Activated CD4-positive, alpha-beta T cell treated with anti-CD3 and anti-CD28 coated beads, Interleukin-2, amount 10 ng/mL, durations not matched to agents 24 days and 14 days (primary cell): ENCODE measurements at regions of chr11 and their contacts with region 1.

Region 1: DNA sequence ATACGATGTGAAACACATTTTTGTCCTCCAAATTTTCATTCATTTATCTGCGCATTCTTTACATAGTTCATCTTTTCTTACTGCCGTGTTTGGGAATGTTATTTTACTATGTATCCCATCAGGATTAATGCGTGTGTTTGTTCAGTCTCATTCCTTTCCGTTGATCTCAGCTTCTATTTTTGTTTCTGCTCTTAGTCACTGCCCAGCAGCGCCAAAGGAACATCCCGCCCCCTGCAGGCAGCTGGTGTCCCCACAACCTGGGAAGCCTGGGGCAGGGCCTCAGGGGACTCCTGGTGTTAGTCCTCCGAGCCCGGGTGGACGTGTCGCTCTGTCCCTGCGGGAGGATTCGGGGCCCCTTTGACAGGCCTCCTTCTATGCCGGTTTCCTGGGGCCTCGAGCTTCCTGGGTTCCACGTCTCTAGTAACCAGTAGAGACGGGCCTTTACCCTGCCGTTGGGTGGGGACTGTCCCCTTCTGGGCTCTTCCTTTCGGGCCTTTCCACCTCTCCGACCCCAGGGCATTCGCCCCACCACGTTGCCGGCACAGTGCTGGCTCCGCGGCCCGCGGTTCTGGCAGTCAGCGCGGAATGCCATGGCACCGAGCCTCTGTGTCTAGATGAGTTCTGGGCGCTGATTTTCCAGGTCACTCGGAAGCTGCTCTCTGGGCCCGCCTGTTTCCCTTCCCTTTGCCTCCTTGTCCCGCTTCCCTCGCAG is 39.8 kb downstream of the WEE1 start:
- DNase-seq: peak; percentile 96
- H3K4me3 Mint-ChIP-seq: peak overlapping the region; percentile 90
- H3K27ac Mint-ChIP-seq: peak overlapping the region; percentile 98
- H3K4me1 Mint-ChIP-seq: peaks cover 35% of the 10 kb centered on the region
- H3K27me3 Mint-ChIP-seq: no peaks in the 10 kb centered on the region

Region 2: DNA sequence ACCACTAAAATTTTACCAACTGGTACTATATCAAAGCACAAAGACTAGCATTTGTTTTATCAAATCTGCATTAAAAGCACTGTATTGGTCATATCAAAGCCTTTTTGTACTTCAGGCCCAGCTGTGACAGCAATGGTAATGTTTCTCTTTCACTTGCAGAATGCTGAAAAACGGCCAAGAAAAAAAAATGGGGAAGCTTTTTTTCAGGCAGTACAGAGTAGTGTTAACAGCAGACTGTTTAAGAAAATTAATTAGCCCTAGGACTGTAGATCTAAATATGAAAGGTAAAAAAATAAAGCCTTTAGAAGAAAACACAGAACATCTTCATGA is 381.5 kb before region 1 on chr11:
- intact Hi-C with region 1: no loop called
- DNase-seq: peak; percentile 76
- H3K4me3 Mint-ChIP-seq: peak overlapping the region; percentile 67
- H3K27ac Mint-ChIP-seq: peak overlapping the region; percentile 16
- H3K4me1 Mint-ChIP-seq: peaks cover 36% of the 10 kb centered on the region
- H3K27me3 Mint-ChIP-seq: no peaks in the 10 kb centered on the region

Region 3: DNA sequence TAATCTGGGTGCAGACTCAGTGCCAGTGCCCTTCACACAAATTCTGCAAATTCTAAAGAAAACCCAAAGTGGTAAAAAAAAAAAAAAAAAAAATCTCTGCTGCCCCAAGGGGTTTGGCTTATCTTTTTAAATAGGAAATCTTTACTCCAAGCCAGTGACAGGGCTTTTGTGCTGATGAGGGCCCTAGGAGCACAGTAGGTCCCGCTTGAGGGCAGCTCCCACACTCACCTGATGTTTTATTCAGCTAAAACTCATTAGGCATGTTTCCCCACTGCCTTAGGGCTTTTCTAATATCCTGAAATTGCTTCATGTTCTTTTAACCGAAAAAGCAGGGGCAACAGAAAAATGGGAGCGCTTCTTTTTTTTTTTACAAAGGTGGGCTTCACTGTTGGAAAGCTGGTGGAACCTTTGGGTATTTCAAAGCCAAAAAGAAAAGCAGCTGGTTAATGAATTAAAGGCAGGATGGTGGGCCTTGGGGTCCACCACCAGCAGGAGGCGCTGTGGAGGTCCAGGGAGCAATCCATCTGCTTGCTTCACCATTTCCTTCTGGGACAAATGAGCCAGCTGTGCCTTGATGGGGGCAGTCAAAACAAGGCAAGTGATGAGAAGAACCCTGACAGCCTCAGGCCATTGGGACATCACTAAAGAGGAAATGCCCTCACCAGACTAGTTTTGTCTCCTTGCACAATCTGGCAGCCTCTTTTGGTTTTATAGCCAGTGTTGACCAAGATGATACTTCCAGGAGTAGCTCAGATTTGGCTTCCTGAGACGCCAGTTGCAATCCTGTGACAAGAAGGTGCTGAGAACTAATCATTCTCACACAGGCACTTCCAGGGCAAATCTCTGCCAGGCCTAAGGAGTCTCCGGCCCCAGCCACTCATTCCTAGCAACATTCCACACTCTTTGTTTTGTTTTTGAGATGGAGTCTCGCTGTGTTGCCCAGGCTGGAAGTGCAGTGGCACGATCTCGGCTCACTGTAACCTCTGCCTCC is 78.2 kb before region 1 on chr11:
- intact Hi-C with region 1: loop called (anchors 1 kb)
- DNase-seq: peak; percentile 93
- H3K4me3 Mint-ChIP-seq: no peak overlapping the region
- H3K27ac Mint-ChIP-seq: no peak overlapping the region
- H3K4me1 Mint-ChIP-seq: no peaks in the 10 kb centered on the region
- H3K27me3 Mint-ChIP-seq: no peaks in the 10 kb centered on the region

Region 4: DNA sequence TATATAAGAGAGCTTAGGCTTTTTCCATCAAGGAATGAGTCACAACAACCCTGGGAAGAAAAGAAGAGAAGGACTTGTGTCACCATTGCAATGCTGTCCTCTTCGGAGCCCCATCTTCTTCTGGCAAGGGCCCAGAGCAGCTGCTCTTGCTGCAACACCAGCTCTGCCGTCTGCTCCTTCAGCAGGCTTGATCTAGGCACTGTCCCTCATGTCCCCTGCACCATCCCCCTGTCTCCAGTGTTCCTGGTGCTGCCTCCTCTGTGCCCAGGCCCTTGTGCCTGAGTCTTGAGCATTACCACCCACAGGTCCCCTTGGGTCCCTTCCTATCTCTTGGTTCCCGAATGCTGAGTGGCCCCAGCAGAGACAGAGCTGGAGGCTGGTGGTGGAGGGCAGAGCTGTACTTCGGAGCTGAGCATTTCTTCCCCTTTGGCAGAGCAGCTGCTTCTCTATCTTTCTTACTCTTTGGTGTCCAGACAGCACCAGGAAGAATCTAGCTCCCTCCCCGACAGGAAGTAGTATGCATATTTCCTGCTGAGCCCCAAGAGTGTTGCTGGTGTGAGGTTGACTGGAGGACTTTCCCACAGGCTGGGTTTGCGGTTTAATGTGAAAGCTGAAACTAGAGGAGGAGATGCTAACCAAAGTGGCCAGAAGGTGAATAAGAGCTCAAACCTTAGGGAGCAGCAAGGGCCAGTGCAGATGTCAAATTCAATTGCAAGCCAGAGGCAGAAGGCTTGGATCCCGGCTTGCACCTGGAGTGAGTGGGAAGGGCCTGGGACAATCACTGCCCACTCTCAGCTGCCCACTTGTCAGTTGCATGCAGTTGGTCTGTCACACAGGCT is 12.0 kb before region 1 on chr11:
- intact Hi-C with region 1: loop called (anchors 1 kb)
- DNase-seq: peak; percentile 92
- H3K4me3 Mint-ChIP-seq: peak overlapping the region; percentile 83
- H3K27ac Mint-ChIP-seq: peak overlapping the region; percentile 88
- H3K4me1 Mint-ChIP-seq: peaks cover 30% of the 10 kb centered on the region
- H3K27me3 Mint-ChIP-seq: peaks cover 7% of the 10 kb centered on the region

Region 5: DNA sequence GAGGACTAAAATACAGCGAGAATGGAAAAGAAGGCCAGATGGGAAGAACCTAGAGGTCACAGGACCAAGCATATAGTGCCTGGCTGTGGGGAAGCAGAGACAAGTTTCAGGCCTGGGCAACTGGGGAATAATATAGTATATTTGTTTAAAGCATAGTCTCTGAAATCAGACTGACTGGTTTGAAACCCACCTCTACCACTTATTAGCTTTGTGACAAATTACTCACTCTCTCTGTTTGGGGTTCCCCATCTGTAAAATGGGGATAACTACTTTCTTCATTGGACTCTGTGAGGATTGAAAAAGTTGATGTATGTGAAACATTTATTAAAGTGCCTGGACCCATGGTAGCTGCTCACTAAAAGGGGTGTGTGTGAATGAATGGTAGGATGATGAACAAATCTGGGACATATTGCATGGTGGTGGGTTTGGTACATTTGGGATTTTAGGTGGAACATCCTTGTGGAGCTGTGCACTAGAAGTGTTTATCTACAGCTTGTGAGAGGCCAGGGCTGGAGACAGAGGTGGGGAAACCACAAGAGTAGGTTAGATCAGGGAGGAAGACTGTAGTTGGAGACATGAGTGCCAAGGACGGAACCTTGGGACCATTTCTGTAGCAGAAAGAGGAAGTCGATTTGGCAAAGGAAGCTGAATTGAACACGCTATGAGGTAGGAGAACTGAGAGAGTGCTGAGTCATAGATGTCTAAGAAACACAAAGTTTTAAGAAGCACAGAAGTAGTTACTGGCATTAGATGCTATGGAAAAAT is 103.2 kb after region 1 on chr11:
- intact Hi-C with region 1: no loop called
- DNase-seq: peak; percentile 61
- H3K4me3 Mint-ChIP-seq: peak overlapping the region; percentile 31
- H3K27ac Mint-ChIP-seq: peak overlapping the region; percentile 63
- H3K4me1 Mint-ChIP-seq: peaks cover 20% of the 10 kb centered on the region
- H3K27me3 Mint-ChIP-seq: peaks cover 3% of the 10 kb centered on the region

Region 6: GRCh38 chr11:9748361-9748970 is 135.2 kb after region 1 on chr11:
- intact Hi-C with region 1: loop called (anchors 1 kb)
- DNase-seq: peak; percentile 90
- H3K4me3 Mint-ChIP-seq: no peak overlapping the region
- H3K27ac Mint-ChIP-seq: no peak overlapping the region
- H3K4me1 Mint-ChIP-seq: peaks cover 19% of the 10 kb centered on the region
- H3K27me3 Mint-ChIP-seq: no peaks in the 10 kb centered on the region

Region 7: GRCh38 chr11:9972989-9973388 is 359.7 kb after region 1 on chr11:
- intact Hi-C with region 1: loop called (anchors 5 kb)
- DNase-seq: peak; percentile 80
- H3K4me3 Mint-ChIP-seq: no peak overlapping the region
- H3K27ac Mint-ChIP-seq: no peak overlapping the region
- H3K4me1 Mint-ChIP-seq: peaks cover 4% of the 10 kb centered on the region
- H3K27me3 Mint-ChIP-seq: no peaks in the 10 kb centered on the region